Calu3 (cell line): ENCODE measurements at regions of chr17 and their contacts with region 1.

Region 1: DNA sequence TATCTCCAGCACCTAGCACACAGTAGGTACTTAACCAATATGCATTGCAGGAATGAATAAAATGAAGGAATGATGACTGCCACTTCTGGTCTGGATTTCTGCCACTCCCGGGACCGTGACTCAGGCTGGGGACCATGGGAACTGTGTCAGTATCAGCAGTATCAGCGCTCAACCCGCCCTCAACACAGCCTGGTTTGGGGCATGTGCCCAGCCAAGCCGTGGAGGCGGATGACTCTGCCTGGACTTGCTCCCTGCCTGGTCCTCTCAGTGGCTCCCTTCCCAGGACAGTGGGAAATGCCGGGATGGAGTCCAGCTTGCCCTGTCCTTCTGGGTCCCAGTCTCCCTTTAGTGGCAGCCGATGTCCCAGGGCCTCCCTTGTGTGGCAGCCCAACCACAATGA is 55.1 kb downstream of the SRCIN1 start:
- DNase-seq: peak; percentile 47
- H3K4me3 Mint-ChIP-seq: no peak overlapping the region
- H3K27ac Mint-ChIP-seq: no peak overlapping the region
- H3K4me1 Mint-ChIP-seq: no peaks in the 10 kb centered on the region
- H3K27me3 Mint-ChIP-seq: peaks cover 43% of the 10 kb centered on the region
- CTCF ChIP-seq: no peak

Region 2: DNA sequence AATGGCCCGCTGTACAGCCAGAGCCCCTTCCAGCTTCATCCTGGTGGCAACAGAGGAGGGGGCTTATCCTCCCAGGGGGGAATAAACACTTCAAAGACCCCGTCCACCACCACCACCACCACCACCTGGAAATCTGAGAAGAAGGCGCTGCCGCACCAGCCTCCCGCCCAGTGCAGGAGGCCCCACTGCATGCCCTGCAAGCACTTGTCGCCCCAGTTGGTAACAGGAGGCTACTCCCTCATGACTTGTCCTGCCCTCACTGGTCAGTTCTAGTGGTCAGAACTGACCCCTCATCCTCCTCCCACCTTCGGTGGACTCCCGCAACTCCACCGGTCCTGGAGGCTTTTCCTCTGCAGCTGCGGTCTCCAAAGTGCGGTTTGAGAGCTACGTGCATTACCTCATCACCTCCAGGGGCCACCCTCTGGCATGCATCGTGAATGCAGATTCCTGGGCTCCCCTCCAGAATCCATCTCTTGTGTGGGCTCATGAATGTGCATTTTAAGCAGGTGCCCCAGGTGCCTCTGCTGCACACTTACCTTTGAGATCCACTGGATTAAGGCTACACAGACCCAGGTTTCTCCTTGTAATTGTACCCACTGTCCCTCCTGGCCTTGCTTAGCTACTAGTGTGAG is 16.7 kb before region 1 on chr17:
- CTCF ChIA-PET with region 1: interaction called, 10 read pairs
- intact Hi-C with region 1: no loop called
- DNase-seq: no peak
- H3K4me3 Mint-ChIP-seq: no peak overlapping the region
- H3K27ac Mint-ChIP-seq: no peak overlapping the region
- H3K4me1 Mint-ChIP-seq: no peaks in the 10 kb centered on the region
- H3K27me3 Mint-ChIP-seq: peaks cover 82% of the 10 kb centered on the region
- CTCF ChIP-seq: no peak

Region 3: DNA sequence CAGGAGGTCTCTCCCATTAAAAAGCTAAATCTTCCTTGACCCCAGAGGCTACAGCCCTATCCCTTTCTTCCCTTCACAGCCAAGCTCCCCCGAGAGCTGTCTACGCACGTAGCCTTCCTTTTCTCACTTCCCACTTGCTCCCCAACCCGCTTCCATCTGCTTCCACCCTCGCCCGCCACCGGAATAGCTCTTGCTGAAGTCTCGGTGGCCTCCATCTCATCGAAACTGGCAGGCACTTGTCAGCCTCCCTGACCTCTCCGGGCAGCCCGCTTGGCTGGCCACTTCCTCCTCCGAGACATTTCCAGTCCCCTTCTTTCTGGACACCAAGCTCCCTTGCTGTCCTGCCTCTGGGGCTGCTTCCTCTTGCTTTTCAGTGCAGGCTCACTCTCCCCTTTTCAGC is 134.8 kb after region 1 on chr17:
- CTCF ChIA-PET with region 1: no interaction called
- intact Hi-C with region 1: no loop called
- DNase-seq: no peak
- H3K4me3 Mint-ChIP-seq: no peak overlapping the region
- H3K27ac Mint-ChIP-seq: no peak overlapping the region
- H3K4me1 Mint-ChIP-seq: no peaks in the 10 kb centered on the region
- H3K27me3 Mint-ChIP-seq: peaks cover 46% of the 10 kb centered on the region
- CTCF ChIP-seq: no peak